Endothelial cell of umbilical vein (primary cell): ENCODE measurements at regions of chr3 and their contacts with region 1.

Region 1: GRCh38 chr3:112043603-112044201 is 9.2 kb downstream of the TMPRSS7 start:
- DNase-seq: peak; percentile 71
- H3K4me3 ChIP-seq: no peak overlapping the region
- H3K27ac ChIP-seq: no peak overlapping the region
- H3K4me1 ChIP-seq: no peaks in the 10 kb centered on the region
- H3K27me3 ChIP-seq: no peaks in the 10 kb centered on the region
- CTCF ChIP-seq: peak; percentile 80 to 85
- POLR2A ChIP-seq: no peak

Region 2: GRCh38 chr3:111668912-111669488 is 374.7 kb before region 1 on chr3:
- CTCF ChIA-PET with region 1: interaction called, 11 read pairs
- POLR2A ChIA-PET with region 1: no interaction called
- dilution Hi-C with region 1: no loop called
- intact Hi-C with region 1: loop called (anchors 2 kb)
- DNase-seq: peak; percentile 63
- H3K4me3 ChIP-seq: no peak overlapping the region
- H3K27ac ChIP-seq: peak overlapping the region; percentile 29
- H3K4me1 ChIP-seq: peaks cover 31% of the 10 kb centered on the region
- H3K27me3 ChIP-seq: no peaks in the 10 kb centered on the region
- CTCF ChIP-seq: peak; percentile 61
- POLR2A ChIP-seq: no peak

Region 3: DNA sequence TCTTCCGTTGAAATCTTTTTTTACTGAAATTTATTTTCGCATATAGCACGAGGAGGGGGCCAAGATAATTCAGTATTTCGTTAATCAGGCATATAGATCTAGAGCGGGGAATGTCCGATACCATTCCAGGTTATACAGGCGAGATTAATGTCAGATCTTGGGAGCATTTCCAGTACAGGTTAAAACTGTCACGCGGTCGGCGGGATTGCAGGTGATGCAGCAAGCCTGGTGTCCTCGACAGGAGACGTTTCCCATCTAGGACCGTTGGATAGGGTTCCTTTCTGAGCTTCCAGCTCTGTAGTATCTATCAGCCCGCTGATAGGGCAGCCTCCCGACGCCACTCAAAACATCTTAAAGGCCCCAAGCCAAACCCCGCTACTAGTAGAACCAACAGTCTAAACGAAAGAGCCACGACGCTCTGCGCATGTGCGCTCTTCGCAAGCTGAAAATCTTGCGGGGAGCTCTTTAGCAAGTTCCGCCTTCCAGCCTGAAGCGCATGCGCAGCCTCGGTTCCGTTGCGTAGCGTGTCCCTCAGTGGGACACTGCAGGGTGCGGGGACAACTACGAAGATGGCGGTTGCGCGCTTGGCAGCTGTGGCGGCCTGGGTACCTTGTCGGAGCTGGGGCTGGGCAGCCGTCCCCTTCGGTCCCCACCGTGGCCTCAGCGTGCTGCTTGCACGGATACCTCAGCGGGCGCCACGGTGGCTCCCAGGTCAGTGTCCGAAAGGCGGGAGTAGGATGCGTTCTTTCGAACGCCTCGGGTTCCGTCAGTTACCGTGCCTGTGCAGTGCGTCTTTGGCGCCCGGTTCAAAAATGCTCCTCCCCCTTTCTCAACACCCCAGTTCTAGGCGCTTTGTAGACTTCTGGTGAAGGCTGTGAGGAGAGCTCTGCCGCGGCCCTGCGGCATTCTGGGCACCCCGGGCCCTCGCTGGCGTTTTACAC is 64.9 kb before region 1 on chr3 and contains the start of gene ABHD10:
- CTCF ChIA-PET with region 1: interaction called, 11 read pairs
- POLR2A ChIA-PET with region 1: no interaction called
- dilution Hi-C with region 1: no loop called
- intact Hi-C with region 1: no loop called
- DNase-seq: peak; percentile 99
- H3K4me3 ChIP-seq: peak within 1 kb of the TSS; percentile 80 to 96 (median 96)
- H3K27ac ChIP-seq: peak within 1 kb of the TSS; percentile 33
- H3K4me1 ChIP-seq: peaks cover 21% of the 10 kb centered on the region
- H3K27me3 ChIP-seq: no peaks in the 10 kb centered on the region
- CTCF ChIP-seq: no peak
- POLR2A ChIP-seq: peak; percentile 90
- total RNA-seq, gene ABHD10: 26.2 and 37.0 TPM in 2 replicates

Region 4: DNA sequence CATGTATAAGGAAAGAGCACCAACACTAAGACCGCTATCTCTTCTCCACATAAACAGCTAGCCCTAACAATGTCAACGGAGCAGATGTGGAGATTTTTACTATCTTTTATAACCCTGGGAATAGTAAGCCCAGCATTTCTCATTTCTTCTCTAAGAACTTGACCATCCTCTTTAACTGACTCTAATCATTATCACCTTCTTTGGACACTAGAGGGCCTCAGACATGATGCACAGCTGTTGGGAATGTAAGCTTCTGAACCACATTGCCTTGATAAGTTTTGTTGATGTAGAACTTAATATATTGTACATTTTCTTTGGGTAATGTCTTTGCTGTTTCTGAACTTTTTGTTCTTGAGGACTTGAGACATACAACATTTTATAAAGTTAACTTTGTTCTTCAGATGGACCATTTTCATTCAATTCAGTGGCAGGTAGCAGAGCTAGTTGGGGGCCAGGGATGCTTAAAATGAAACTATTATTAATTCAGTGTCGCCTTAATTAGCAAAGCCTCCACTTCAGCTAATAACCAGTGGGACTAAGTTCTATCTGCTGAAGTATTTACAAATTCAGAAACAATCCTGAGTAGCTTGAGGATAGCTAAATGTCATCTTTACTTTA is 54.5 kb before region 1 on chr3:
- CTCF ChIA-PET with region 1: interaction called, 33 read pairs
- POLR2A ChIA-PET with region 1: no interaction called
- dilution Hi-C with region 1: no loop called
- intact Hi-C with region 1: loop called (anchors 1 kb)
- DNase-seq: peak; percentile 72
- H3K4me3 ChIP-seq: no peak overlapping the region
- H3K27ac ChIP-seq: no peak overlapping the region
- H3K4me1 ChIP-seq: no peaks in the 10 kb centered on the region
- H3K27me3 ChIP-seq: no peaks in the 10 kb centered on the region
- CTCF ChIP-seq: peak; percentile 55 to 60
- POLR2A ChIP-seq: no peak

Region 5: DNA sequence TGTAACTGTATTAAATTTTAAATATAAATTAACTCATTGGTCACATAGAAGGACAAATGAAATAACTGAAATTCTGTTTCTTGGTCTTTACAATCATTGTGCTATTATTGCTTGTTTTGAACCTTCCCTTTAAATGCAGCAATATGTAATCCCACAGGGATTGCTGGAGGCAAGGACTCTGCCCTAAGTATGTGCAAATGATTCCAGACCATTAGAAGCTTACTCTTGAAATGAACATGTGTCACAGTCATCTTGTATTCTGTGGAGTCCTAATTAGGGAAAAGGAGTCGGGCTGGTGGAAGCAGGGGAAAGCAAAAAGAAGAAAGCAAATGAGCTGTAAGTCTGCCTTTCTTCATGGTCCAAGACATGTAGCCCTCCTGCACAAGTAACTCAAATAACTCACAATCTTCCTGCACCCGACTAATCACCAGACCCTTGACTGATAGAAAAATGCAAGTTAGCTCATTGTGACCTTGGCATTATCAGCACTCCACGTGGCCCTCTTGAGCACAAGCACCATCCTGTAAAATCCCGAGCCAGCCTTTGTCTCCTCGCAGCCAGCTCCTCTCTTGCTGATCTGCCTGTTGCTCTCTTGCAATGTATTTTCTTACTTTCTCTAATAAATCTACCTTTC is 11.5 kb before region 1 on chr3:
- CTCF ChIA-PET with region 1: interaction called, 16 read pairs
- POLR2A ChIA-PET with region 1: no interaction called
- dilution Hi-C with region 1: no loop called
- intact Hi-C with region 1: no loop called
- DNase-seq: no peak
- H3K4me3 ChIP-seq: no peak overlapping the region
- H3K27ac ChIP-seq: no peak overlapping the region
- H3K4me1 ChIP-seq: no peaks in the 10 kb centered on the region
- H3K27me3 ChIP-seq: peaks cover 0 to 2% of the 10 kb centered on the region in 2 experiments
- CTCF ChIP-seq: no peak
- POLR2A ChIP-seq: no peak